ENCODE measurements at regions of chr11 and their contacts with region 1.

Region 1: GRCh38 chr11:68542617-68543016 is 82.1 kb downstream of the PPP6R3 start:
- DNase-seq: no peak
- H3K4me3 ChIP-seq: no peak overlapping the region
- H3K27ac ChIP-seq: peak overlapping the region; percentile 18 to 72 (median 66)
- H3K4me1 ChIP-seq: peaks cover 0 to 36% (median 14%) of the 10 kb centered on the region in 4 donors
- H3K27me3 ChIP-seq: no peaks in the 10 kb centered on the region
- CTCF ChIP-seq: no peak
- EP300 ChIP-seq: no peak
- POLR2A ChIP-seq: no peak

Region 2: DNA sequence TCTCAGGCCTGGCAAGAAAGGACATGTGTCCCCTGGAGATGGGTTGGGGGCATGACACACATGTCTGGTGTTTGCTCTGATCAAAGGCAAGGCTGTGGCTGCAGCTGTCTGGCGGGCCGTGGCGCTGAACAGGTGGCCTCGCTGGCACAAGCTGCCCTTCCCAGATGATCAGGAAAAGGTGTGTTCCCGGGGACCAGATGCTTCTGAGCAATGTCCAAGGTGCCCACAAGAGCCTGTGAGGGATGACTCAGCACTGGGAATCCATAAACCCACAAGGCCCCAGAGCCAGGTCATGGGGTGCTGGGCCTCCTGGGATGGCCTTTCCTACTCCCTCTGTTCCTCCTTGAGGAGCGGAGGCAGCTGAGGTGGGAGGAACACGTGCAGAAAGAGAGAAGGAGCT is 239.9 kb before region 1 on chr11:
- in situ Hi-C with region 1: no loop called
- intact Hi-C with region 1: no loop called
- DNase-seq: peak; percentile 84
- H3K4me3 ChIP-seq: no peak overlapping the region
- H3K27ac ChIP-seq: peak overlapping the region; percentile 60 to 70 (median 68)
- H3K4me1 ChIP-seq: peaks cover under 1 to 34% (median 26%) of the 10 kb centered on the region in 4 donors
- H3K27me3 ChIP-seq: no peaks in the 10 kb centered on the region
- CTCF ChIP-seq: peak in 1 of 5 experiments; percentile 25
- EP300 ChIP-seq: no peak
- POLR2A ChIP-seq: peak; percentile 20

Region 3: GRCh38 chr11:68463714-68464113 is 78.9 kb before region 1 on chr11:
- in situ Hi-C with region 1: no loop called
- intact Hi-C with region 1: loop called (anchors 1 kb)
- DNase-seq: no peak
- H3K4me3 ChIP-seq: no peak overlapping the region
- H3K27ac ChIP-seq: peak overlapping the region in 1 of 4 donors; percentile 5
- H3K4me1 ChIP-seq: peaks cover 39 to 73% (median 65%) of the 10 kb centered on the region in 4 donors
- H3K27me3 ChIP-seq: no peaks in the 10 kb centered on the region
- CTCF ChIP-seq: no peak
- EP300 ChIP-seq: no peak
- POLR2A ChIP-seq: no peak

Measured in transverse colon (tissue), 4 donors.